Activated CD8-positive, alpha-beta T cell treated with anti-CD3 and anti-CD28 coated beads, Interleukin-2, amount 10 ng/mL, durations not matched to agents 7 days and 5 days (primary cell): ENCODE measurements at regions of chr19 and their contacts with region 1.

Region 1: GRCh38 chr19:12666265-12667048 is at the starts of genes MAN2B1 and WDR83:
- DNase-seq: peak; percentile 79
- ATAC-seq: peak; percentile 78
- H3K4me3 Mint-ChIP-seq: peak within 1 kb of the TSS; percentile 86
- H3K27ac Mint-ChIP-seq: peak within 1 kb of the TSS; percentile 78
- H3K4me1 Mint-ChIP-seq: peaks cover 51% of the 10 kb centered on the region
- H3K27me3 Mint-ChIP-seq: no peaks in the 10 kb centered on the region
- total RNA-seq, gene MAN2B1: 95.5 to 102 TPM
- total RNA-seq, gene WDR83: 16.4 to 19.4 TPM

Region 2: GRCh38 chr19:12325690-12326089 is 340.8 kb before region 1 on chr19:
- CTCF ChIA-PET with region 1: no interaction called
- POLR2A ChIA-PET with region 1: no interaction called
- DNase-seq: no peak
- ATAC-seq: no peak
- H3K4me3 Mint-ChIP-seq: no peak overlapping the region
- H3K27ac Mint-ChIP-seq: no peak overlapping the region
- H3K4me1 Mint-ChIP-seq: no peaks in the 10 kb centered on the region
- H3K27me3 Mint-ChIP-seq: no peaks in the 10 kb centered on the region

Region 3: GRCh38 chr19:12639901-12640613 is 26.4 kb before region 1 on chr19:
- CTCF ChIA-PET with region 1: interaction called, 10 read pairs
- POLR2A ChIA-PET with region 1: interaction called, 3 read pairs
- DNase-seq: peak; percentile 92
- ATAC-seq: peak; percentile 95
- H3K4me3 Mint-ChIP-seq: peak overlapping the region; percentile 65
- H3K27ac Mint-ChIP-seq: peak overlapping the region; percentile 90
- H3K4me1 Mint-ChIP-seq: peaks cover 19% of the 10 kb centered on the region
- H3K27me3 Mint-ChIP-seq: no peaks in the 10 kb centered on the region

Region 4: GRCh38 chr19:12705654-12706331 is 39.3 kb after region 1 on chr19:
- CTCF ChIA-PET with region 1: no interaction called
- POLR2A ChIA-PET with region 1: no interaction called
- DNase-seq: no peak
- ATAC-seq: no peak
- H3K4me3 Mint-ChIP-seq: no peak overlapping the region
- H3K27ac Mint-ChIP-seq: no peak overlapping the region
- H3K4me1 Mint-ChIP-seq: no peaks in the 10 kb centered on the region
- H3K27me3 Mint-ChIP-seq: no peaks in the 10 kb centered on the region